ENCODE measurements at regions of chr1 and their contacts with region 1.

Region 1: DNA sequence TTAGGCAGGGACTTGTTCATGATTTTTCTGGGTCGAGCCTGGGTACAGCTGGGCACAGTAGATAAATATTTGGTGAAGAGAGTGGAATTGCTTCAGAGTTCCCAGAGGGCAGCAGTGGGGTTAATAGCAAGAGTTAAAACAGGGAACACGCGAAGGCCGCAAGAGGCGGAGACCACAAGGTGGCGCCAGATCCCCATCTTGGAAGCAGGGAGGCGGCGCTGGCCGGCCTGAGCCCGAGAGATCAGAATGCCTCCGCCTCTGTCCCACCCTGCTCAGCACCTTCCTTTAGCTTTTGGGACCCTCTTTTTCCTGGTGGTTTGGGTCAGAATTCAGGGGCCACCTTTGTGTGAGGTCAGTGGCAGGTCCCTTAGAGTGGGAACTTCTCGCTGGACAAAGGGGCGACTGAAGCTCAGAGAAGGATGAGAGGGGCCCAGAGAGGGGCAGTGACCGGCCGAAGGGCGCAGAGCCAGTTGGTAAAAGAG is 6.5 kb upstream of the PADI2 start:
- DNase-seq: peak; percentile 86 to 95 (median 92)
- ATAC-seq: peak; percentile 87 to 89
- H3K4me3 ChIP-seq: no peak overlapping the region
- H3K27ac ChIP-seq: no peak overlapping the region
- H3K4me1 ChIP-seq: no peaks in the 10 kb centered on the region
- H3K27me3 ChIP-seq: no peaks in the 10 kb centered on the region

Region 2: GRCh38 chr1:16903054-16903453 is 222.7 kb before region 1 on chr1:
- intact Hi-C with region 1: no loop called
- DNase-seq: no peak
- ATAC-seq: no peak
- H3K4me3 ChIP-seq: no peak overlapping the region
- H3K27ac ChIP-seq: peak overlapping the region; percentile 35
- H3K4me1 ChIP-seq: no peaks in the 10 kb centered on the region
- H3K27me3 ChIP-seq: no peaks in the 10 kb centered on the region

Region 3: DNA sequence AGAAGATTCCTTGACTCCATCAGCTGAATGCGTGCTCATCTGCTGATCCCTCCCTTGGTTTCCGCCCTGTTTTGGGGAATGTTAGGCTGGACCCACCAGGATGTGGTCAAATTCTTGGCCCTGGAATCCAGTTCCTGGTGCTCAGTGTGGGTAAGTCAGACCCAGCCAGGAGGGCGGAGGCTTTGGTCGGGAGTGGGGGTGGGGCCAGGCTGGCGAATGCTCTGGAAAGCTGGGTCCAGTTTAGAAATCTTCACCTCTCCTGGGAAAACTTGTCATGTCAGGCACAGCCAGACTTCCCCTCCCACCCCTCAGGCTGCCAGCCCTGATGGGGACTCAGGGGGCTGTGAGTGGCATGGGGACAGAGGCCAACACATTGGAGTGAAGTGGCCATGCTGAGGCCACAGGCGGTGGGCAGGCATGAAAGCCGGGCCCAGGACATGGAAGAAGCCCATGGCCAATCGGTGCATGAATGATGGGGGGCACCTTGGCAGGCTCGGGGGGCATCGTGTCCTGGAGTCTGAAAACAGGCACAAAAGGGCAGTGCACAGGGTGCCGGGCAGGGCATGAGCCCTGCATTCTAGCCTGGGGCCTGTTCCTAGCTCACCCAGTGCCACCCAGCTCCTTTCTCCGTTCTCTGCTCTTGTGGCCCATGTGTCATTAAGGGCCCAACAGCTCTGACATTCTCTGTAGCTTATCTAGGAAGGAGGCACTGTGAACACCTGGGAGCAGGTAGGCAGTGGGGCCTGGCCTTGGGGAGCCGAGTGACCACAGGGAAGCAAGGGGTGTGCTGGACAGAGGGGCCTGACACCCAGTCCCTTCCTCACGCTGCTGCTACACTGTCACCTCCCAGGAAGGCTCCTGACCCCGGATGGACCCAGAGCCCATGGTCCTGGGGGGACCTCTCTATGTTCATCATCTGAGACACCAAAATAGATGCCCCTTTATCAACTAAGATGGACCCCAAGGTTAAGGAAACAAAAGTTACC is 64.5 kb after region 1 on chr1:
- intact Hi-C with region 1: no loop called
- DNase-seq: no peak
- ATAC-seq: no peak
- H3K4me3 ChIP-seq: no peak overlapping the region
- H3K27ac ChIP-seq: no peak overlapping the region
- H3K4me1 ChIP-seq: no peaks in the 10 kb centered on the region
- H3K27me3 ChIP-seq: no peaks in the 10 kb centered on the region

Region 4: GRCh38 chr1:17236779-17237560 is 111.2 kb after region 1 on chr1:
- intact Hi-C with region 1: loop called (anchors 2 to 5 kb)
- DNase-seq: peak; percentile 82 to 94 (median 90)
- ATAC-seq: peak; percentile 67 to 85
- H3K4me3 ChIP-seq: no peak overlapping the region
- H3K27ac ChIP-seq: no peak overlapping the region
- H3K4me1 ChIP-seq: no peaks in the 10 kb centered on the region
- H3K27me3 ChIP-seq: no peaks in the 10 kb centered on the region

Region 5: DNA sequence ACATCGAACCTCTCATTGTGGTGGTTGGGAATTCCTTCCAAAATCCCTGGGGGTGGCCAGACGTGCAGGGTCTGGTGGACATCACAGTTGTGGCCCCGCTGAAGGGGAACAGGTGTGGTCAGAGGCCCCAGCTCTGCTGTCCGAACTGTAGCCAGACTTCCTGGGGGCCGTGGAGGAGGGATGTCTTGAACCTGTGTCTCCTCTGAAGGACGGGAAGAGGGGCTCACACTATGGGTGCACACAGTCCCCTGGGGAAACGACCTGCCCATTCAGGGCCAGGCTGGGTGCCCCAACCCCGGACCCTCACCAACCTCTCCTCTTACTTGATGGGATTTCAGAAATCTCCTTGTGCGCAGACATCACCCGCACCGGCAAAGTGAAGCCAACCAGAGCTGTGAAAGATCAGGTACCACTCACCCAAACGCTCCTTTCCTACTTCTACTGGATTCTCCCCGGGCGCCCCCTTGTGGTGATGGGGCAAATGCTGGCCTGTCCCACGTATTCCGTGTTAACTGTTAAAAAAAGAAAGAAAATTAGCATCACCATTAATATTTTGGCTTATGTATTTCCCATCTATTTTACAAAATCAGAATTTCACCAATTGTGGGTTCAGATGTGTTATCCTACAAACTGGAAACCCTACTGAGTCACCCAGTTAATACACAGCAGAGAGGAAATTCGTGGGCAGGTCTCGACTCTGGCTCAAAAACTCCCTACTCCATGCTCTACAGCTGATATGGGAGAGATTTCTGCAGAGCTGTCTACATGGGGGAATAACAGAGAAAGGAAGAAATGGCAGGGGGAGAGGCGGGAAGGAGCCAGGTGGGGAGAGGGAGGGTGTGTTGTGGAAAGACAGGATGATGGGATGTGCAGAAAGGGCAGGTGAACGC is 210.3 kb after region 1 on chr1:
- intact Hi-C with region 1: loop called in 2 of 4 experiments (anchors 5 to 10 kb)
- DNase-seq: peak; percentile 44 to 77 (median 75)
- ATAC-seq: no peak
- H3K4me3 ChIP-seq: no peak overlapping the region
- H3K27ac ChIP-seq: no peak overlapping the region
- H3K4me1 ChIP-seq: no peaks in the 10 kb centered on the region
- H3K27me3 ChIP-seq: no peaks in the 10 kb centered on the region

Region 6: GRCh38 chr1:17405898-17406759 is 280.3 kb after region 1 on chr1:
- intact Hi-C with region 1: loop called in 3 of 4 experiments (anchors 5 to 10 kb)
- DNase-seq: peak; percentile 54 to 84 (median 73)
- ATAC-seq: peak; percentile 79 to 83
- H3K4me3 ChIP-seq: no peak overlapping the region
- H3K27ac ChIP-seq: no peak overlapping the region
- H3K4me1 ChIP-seq: no peaks in the 10 kb centered on the region
- H3K27me3 ChIP-seq: no peaks in the 10 kb centered on the region